ENCODE measurements at regions of chr12 and their contacts with region 1.

Region 1: GRCh38 chr12:98424726-98425401 is 90.5 kb upstream of the TMPO start:
- DNase-seq: peak; percentile 60 to 78 (median 74)
- ATAC-seq: peak; percentile 91
- H3K4me3 ChIP-seq: no peak overlapping the region
- H3K27ac ChIP-seq: no peak overlapping the region
- H3K4me1 ChIP-seq: peaks cover 3 to 7% of the 10 kb centered on the region in 2 experiments; a peak in 2 of 5 replicates
- H3K27me3 ChIP-seq: peaks cover 3 to 38% of the 10 kb centered on the region in 2 experiments; a peak in 4 of 5 replicates
- CTCF ChIP-seq: peak; percentile 73 to 83 (median 76)
- EP300 ChIP-seq: no peak
- POLR2A ChIP-seq: no peak
- RAD21 ChIP-seq: peak; percentile 71 to 79

Region 2: DNA sequence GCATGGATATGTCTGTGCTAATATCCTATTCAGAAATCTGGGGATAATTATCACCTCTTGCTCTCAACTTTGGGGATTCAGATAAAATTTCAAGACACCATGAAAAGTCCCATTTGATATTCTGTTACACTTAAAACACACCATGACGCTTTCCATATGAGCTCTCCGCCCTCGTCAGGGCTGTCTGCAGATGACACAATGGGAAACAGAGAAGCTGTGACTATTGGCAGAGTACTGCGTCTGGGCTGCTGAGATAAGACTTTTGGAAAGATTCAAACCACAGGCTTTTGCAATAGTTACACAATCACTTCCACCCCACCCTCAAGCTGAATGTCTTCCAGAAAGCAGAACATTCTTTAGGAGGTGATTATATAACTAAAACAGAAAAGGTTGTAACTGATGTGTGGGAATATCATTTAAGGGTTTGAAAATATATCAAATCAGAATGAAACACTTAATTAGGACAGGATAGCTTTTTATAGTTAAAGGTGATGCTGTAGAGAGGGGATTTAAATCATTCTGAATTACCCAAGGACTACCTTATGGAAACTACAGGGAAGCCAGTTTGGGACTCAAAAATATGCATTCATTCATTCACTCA is 15.2 kb after region 1 on chr12:
- CTCF ChIA-PET with region 1: interaction called, 3 read pairs
- POLR2A ChIA-PET with region 1: interaction called, 4 read pairs
- in situ Hi-C with region 1: no loop called
- intact Hi-C with region 1: loop called (anchors 2 kb)
- DNase-seq: peak; percentile 64 to 90 (median 76)
- ATAC-seq: peak; percentile 99
- H3K4me3 ChIP-seq: no peak overlapping the region
- H3K27ac ChIP-seq: no peak overlapping the region
- H3K4me1 ChIP-seq: peaks cover 0 to 4% of the 10 kb centered on the region in 2 experiments; a peak in 2 of 5 replicates
- H3K27me3 ChIP-seq: peaks cover 5 to 16% of the 10 kb centered on the region in 2 experiments; a peak in 4 of 5 replicates
- CTCF ChIP-seq: peak in 2 of 3 experiments; percentile 23 to 47; a peak in 3 of 6 replicates
- EP300 ChIP-seq: peak; percentile 98
- POLR2A ChIP-seq: no peak
- RAD21 ChIP-seq: peak; percentile 41 to 42; a peak in 3 of 4 replicates

Region 3: DNA sequence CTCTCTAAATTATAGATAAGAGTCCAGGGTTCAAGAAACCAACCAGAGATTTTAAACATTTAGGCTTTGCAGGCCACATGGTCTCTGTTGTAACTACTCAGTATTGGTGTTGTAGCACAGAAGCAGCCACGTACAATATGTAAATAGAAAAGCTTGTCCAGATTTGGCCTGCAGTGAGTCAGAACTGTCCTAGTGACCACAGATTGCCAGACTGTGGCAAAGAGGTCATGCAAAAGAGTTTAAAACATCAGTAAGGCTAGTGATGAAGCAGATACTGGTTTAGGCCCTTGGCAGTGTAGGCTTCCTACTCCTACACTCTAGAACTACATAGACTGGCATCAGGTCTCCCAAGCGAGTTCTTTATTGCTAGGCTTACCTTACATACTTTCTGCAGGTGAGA is 1105.1 kb after region 1 on chr12:
- CTCF ChIA-PET with region 1: no interaction called
- POLR2A ChIA-PET with region 1: no interaction called
- in situ Hi-C with region 1: no loop called
- intact Hi-C with region 1: no loop called
- DNase-seq: no peak
- ATAC-seq: no peak
- H3K4me3 ChIP-seq: no peak overlapping the region
- H3K27ac ChIP-seq: no peak overlapping the region
- H3K4me1 ChIP-seq: no peaks in the 10 kb centered on the region
- H3K27me3 ChIP-seq: no peaks in the 10 kb centered on the region
- CTCF ChIP-seq: no peak
- EP300 ChIP-seq: no peak
- POLR2A ChIP-seq: no peak
- RAD21 ChIP-seq: no peak

Measured in K562 (cell line).